ENCODE measurements at regions of chr6 and their contacts with region 1.

Region 1: GRCh38 chr6:147194652-147195411 is 9.4 kb upstream of the STXBP5 start:
- DNase-seq: no peak
- H3K4me3 Mint-ChIP-seq: peak overlapping the region; percentile 25
- H3K27ac Mint-ChIP-seq: peak overlapping the region; percentile 88
- H3K4me1 Mint-ChIP-seq: peaks cover 22% of the 10 kb centered on the region
- H3K27me3 Mint-ChIP-seq: no peaks in the 10 kb centered on the region

Region 2: DNA sequence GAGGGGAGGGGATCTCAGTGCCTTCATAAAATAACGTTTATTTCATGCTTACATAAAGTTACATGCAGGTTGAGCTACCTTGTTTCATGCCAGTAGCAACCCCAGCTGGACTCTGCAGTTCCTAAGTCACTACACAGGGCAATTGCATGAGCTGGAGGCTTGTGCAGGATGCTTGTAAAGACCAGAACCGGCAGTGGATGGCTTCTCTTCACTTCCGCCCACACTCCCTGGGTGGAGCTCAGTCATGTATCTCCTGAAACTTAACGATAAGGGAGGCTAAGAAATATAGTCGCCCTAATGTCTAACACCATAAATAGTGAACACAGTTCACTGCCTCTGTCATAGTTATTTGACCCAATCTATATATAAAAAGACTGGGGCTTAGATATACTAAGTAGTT is 750.6 kb before region 1 on chr6:
- CTCF ChIA-PET with region 1: no interaction called
- intact Hi-C with region 1: no loop called
- DNase-seq: no peak
- H3K4me3 Mint-ChIP-seq: no peak overlapping the region
- H3K27ac Mint-ChIP-seq: no peak overlapping the region
- H3K4me1 Mint-ChIP-seq: no peaks in the 10 kb centered on the region
- H3K27me3 Mint-ChIP-seq: peaks cover 18% of the 10 kb centered on the region

Region 3: DNA sequence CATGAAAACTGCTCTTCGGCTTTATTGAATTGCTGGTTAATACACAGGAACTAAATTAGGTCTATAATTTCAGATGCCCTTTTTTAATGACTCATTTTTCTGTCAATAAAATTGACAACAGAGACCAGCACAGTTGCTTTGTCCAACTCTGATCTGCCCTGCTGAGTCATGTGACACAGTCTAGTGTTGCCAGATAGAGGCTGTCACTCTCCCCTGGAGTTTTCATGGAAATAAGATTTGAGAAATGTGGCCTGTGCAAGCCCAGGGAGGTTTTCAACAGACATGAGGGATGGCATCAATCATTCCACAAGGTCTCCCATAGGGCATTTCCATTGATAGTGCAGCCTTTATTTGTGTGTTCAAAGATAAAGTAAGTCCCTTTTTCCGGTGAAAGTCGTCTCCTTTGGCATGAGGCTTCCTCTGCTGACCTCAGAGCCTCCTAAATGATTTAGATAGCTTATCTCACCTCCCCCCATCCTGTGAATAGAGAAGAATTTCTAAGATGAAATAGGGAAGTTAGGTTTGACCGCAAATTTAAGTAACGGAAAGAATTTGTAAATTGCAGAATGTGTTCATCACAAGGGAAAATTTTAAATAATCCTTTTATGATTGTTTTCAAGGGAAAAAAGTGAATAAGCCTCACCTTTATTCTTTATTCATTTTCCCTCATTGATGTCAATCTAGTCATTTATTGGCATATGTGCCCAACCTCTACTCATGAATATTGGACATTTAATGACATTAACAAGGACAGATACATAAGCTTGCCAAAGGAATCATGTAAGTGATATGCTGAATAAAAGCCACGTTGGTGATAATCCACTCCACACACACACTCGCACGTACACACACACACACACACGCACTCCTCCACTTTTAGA is 318.3 kb before region 1 on chr6:
- CTCF ChIA-PET with region 1: no interaction called
- intact Hi-C with region 1: loop called (anchors 1 kb)
- DNase-seq: no peak
- H3K4me3 Mint-ChIP-seq: no peak overlapping the region
- H3K27ac Mint-ChIP-seq: peak overlapping the region; percentile 62
- H3K4me1 Mint-ChIP-seq: peaks cover 19% of the 10 kb centered on the region
- H3K27me3 Mint-ChIP-seq: no peaks in the 10 kb centered on the region

Region 4: GRCh38 chr6:147016440-147016839 is 178.4 kb before region 1 on chr6:
- CTCF ChIA-PET with region 1: no interaction called
- intact Hi-C with region 1: loop called (anchors 5 kb)
- DNase-seq: peak; percentile 7
- H3K4me3 Mint-ChIP-seq: no peak overlapping the region
- H3K27ac Mint-ChIP-seq: peak overlapping the region; percentile 35
- H3K4me1 Mint-ChIP-seq: peaks cover 10% of the 10 kb centered on the region
- H3K27me3 Mint-ChIP-seq: no peaks in the 10 kb centered on the region

Region 5: GRCh38 chr6:147106759-147107401 is 88.0 kb before region 1 on chr6:
- CTCF ChIA-PET with region 1: no interaction called
- intact Hi-C with region 1: loop called (anchors 2 kb)
- DNase-seq: no peak
- H3K4me3 Mint-ChIP-seq: no peak overlapping the region
- H3K27ac Mint-ChIP-seq: no peak overlapping the region
- H3K4me1 Mint-ChIP-seq: peaks cover 55% of the 10 kb centered on the region
- H3K27me3 Mint-ChIP-seq: no peaks in the 10 kb centered on the region

Region 6: GRCh38 chr6:147131532-147132128 is 63.2 kb before region 1 on chr6:
- CTCF ChIA-PET with region 1: no interaction called
- intact Hi-C with region 1: no loop called
- DNase-seq: no peak
- H3K4me3 Mint-ChIP-seq: no peak overlapping the region
- H3K27ac Mint-ChIP-seq: no peak overlapping the region
- H3K4me1 Mint-ChIP-seq: peaks cover 13% of the 10 kb centered on the region
- H3K27me3 Mint-ChIP-seq: no peaks in the 10 kb centered on the region

Region 7: DNA sequence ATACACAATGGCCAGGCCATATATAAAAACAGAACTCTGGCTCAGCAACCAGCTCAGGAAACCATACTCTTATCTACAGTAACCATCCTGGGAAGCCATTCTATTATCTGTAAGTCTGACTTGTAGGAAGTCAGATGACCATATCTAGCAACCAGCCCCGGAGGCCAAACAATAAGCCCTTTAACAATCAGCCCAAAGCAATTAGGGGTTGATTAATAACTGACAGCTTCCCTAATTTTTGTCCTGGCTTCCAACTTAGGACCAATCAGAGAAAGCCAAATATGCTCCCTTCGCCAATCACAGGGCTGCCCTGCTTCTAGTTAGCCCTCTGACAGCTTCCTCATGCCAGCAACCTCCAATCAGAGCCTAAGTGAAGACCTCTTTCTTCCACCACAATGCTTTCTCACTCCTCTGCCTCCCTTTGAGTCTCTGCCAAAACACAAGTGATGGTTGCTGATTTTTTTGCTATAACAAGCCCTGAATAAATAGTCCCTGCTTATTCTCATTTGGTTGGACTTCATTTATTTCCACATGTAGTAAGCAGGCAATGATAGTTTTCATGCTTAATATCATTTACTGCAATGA is 28.4 kb before region 1 on chr6:
- CTCF ChIA-PET with region 1: no interaction called
- intact Hi-C with region 1: loop called (anchors 2 kb)
- DNase-seq: no peak
- H3K4me3 Mint-ChIP-seq: no peak overlapping the region
- H3K27ac Mint-ChIP-seq: no peak overlapping the region
- H3K4me1 Mint-ChIP-seq: peaks cover 6% of the 10 kb centered on the region
- H3K27me3 Mint-ChIP-seq: no peaks in the 10 kb centered on the region

Region 8: DNA sequence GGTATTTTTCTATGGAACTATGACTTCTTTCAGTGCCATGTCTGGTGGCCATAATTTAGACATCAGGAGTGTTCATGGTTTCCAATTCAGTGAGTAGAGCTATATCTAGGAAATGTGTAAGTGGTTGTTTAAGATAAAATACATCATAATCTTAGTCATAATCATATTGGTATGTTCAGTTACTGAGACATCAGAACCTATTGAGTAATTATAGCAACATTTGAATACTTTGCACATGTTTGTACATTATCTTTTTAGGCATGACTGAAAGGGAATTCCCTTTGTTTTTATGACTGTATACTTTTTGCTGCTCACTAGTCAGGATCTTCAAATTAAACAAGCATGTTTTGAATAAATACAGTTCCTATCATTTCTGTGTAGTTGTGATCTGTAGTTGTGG is 73.4 kb after region 1 on chr6:
- CTCF ChIA-PET with region 1: no interaction called
- intact Hi-C with region 1: loop called (anchors 2 kb)
- DNase-seq: no peak
- H3K4me3 Mint-ChIP-seq: no peak overlapping the region
- H3K27ac Mint-ChIP-seq: peak overlapping the region; percentile 83
- H3K4me1 Mint-ChIP-seq: peaks cover 17% of the 10 kb centered on the region
- H3K27me3 Mint-ChIP-seq: no peaks in the 10 kb centered on the region

Measured in activated naive CD4-positive, alpha-beta T cell treated with anti-CD3 and anti-CD28 coated beads for 36 hours (primary cell).